H1 (cell line): ENCODE measurements at regions of chr17 and their contacts with region 1.

Region 1: GRCh38 chr17:57622683-57623433 is 122.2 kb downstream of the CCDC182 start:
- DNase-seq: no peak
- H3K4me3 ChIP-seq: no peak overlapping the region
- H3K27ac ChIP-seq: no peak overlapping the region
- H3K4me1 ChIP-seq: no peaks in the 10 kb centered on the region
- H3K27me3 ChIP-seq: no peaks in the 10 kb centered on the region
- CTCF ChIP-seq: no peak
- EP300 ChIP-seq: no peak
- POLR2A ChIP-seq: no peak
- RAD21 ChIP-seq: no peak

Region 2: GRCh38 chr17:57636985-57637665 is 14.3 kb after region 1 on chr17:
- CTCF ChIA-PET with region 1: interaction called, 12 read pairs
- POLR2A ChIA-PET with region 1: interaction called, 3 read pairs
- DNase-seq: no peak
- H3K4me3 ChIP-seq: no peak overlapping the region
- H3K27ac ChIP-seq: no peak overlapping the region
- H3K4me1 ChIP-seq: peaks cover 0 to 5% (median 4%) of the 10 kb centered on the region in 4 experiments; a peak in 3 of 7 replicates
- H3K27me3 ChIP-seq: no peaks in the 10 kb centered on the region
- CTCF ChIP-seq: no peak
- EP300 ChIP-seq: no peak
- POLR2A ChIP-seq: no peak
- RAD21 ChIP-seq: no peak